CD8-positive, alpha-beta memory T cell (primary cell): ENCODE measurements at regions of chr18 and their contacts with region 1.

Region 1: GRCh38 chr18:62522504-62523254 is at the start of gene ZCCHC2:
- DNase-seq: peak; percentile 96 to 99 (median 98)
- H3K4me3 ChIP-seq: peak within 1 kb of the TSS; percentile 81
- H3K4me3 Mint-ChIP-seq: peak within 1 kb of the TSS; percentile 82 to 98 (median 96)
- H3K27ac ChIP-seq: peak within 1 kb of the TSS; percentile 81
- H3K27ac Mint-ChIP-seq: peak within 1 kb of the TSS; percentile 81 to 98 (median 94)
- H3K4me1 ChIP-seq: peaks cover 26% of the 10 kb centered on the region
- H3K4me1 Mint-ChIP-seq: peaks cover 39 to 45% (median 44%) of the 10 kb centered on the region in 3 donors
- H3K27me3 ChIP-seq: no peaks in the 10 kb centered on the region
- H3K27me3 Mint-ChIP-seq: no peaks in the 10 kb centered on the region
- total RNA-seq, gene ZCCHC2: 36.4 to 37.9 TPM

Region 2: GRCh38 chr18:62425465-62426195 is 97.0 kb before region 1 on chr18:
- CTCF ChIA-PET with region 1: interaction called, 7 read pairs
- POLR2A ChIA-PET with region 1: interaction called, 20 read pairs
- DNase-seq: peak; percentile 15 to 56 (median 51)
- H3K4me3 ChIP-seq: no peak overlapping the region
- H3K4me3 Mint-ChIP-seq: no peak overlapping the region
- H3K27ac ChIP-seq: no peak overlapping the region
- H3K27ac Mint-ChIP-seq: peak overlapping the region in 1 of 8 donors; percentile 10
- H3K4me1 ChIP-seq: peaks cover 10% of the 10 kb centered on the region
- H3K4me1 Mint-ChIP-seq: peaks cover 11 to 18% (median 17%) of the 10 kb centered on the region in 3 donors
- H3K27me3 ChIP-seq: no peaks in the 10 kb centered on the region
- H3K27me3 Mint-ChIP-seq: peaks cover 4 to 12% of the 10 kb centered on the region in 2 donors

Region 3: DNA sequence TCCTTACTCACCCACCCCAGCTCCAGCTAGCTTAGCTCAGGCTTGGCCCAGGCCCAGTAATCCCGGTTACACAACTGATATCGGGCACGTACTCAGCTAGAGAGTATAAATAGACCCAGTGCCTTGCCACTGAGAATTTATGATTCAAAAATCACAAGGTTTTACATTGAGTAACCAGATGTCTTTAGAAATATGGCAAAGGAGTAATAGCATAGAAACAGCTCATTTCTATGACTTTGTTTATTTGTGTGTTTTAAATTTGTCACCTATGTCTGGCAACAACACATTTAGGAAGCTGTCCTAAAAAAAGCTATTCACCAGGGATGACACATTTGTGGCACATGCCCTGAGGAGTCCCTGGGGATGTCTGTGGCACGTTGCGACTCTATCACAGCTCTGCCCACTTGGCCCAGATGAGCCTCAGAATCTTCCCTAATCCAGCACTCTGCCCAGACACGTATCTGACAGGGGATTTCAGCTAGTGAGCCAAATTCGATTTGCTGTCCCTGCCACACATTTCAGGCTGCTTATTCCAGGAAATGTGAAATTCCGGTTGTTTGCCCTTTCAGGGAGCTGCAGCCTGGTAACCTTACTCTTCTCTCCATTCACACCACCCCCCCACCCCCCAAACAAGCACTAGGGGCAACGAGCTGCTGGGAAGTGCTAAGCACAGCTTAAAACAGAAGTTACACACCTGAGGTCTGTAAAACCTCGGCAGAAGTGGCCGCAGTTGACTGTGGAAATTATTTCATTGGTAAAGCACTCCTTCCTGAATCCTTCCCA is 85.3 kb before region 1 on chr18:
- CTCF ChIA-PET with region 1: no interaction called
- POLR2A ChIA-PET with region 1: interaction called, 10 read pairs
- DNase-seq: no peak
- H3K4me3 ChIP-seq: no peak overlapping the region
- H3K4me3 Mint-ChIP-seq: no peak overlapping the region
- H3K27ac ChIP-seq: no peak overlapping the region
- H3K27ac Mint-ChIP-seq: no peak overlapping the region
- H3K4me1 ChIP-seq: no peaks in the 10 kb centered on the region
- H3K4me1 Mint-ChIP-seq: no peaks in the 10 kb centered on the region
- H3K27me3 ChIP-seq: no peaks in the 10 kb centered on the region
- H3K27me3 Mint-ChIP-seq: peaks cover 8 to 19% of the 10 kb centered on the region in 2 donors

Region 4: DNA sequence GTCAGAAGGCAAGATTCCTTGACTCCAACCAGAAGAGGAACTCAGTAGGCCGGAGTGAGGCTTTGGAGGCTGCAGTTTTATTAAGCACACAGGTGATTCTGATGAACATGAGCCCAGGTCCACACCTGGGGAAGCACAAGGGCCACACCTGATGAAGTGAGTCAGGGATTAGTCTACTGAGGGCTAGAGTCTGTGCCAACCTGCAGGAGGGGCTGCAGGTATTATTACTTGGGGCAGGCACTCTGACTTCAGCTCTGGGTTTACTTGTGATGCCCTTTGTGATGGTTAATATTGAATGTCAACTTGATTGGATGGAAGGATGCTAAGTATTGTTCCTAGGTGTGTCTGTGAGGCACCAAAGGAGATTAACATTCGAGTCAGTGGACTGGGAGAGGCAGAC is 75.0 kb before region 1 on chr18:
- CTCF ChIA-PET with region 1: no interaction called
- POLR2A ChIA-PET with region 1: no interaction called
- DNase-seq: no peak
- H3K4me3 ChIP-seq: no peak overlapping the region
- H3K4me3 Mint-ChIP-seq: no peak overlapping the region
- H3K27ac ChIP-seq: no peak overlapping the region
- H3K27ac Mint-ChIP-seq: no peak overlapping the region
- H3K4me1 ChIP-seq: no peaks in the 10 kb centered on the region
- H3K4me1 Mint-ChIP-seq: peaks cover 4 to 5% (median 4%) of the 10 kb centered on the region in 3 donors
- H3K27me3 ChIP-seq: no peaks in the 10 kb centered on the region
- H3K27me3 Mint-ChIP-seq: peaks cover 0 to 5% of the 10 kb centered on the region in 2 donors

Region 5: DNA sequence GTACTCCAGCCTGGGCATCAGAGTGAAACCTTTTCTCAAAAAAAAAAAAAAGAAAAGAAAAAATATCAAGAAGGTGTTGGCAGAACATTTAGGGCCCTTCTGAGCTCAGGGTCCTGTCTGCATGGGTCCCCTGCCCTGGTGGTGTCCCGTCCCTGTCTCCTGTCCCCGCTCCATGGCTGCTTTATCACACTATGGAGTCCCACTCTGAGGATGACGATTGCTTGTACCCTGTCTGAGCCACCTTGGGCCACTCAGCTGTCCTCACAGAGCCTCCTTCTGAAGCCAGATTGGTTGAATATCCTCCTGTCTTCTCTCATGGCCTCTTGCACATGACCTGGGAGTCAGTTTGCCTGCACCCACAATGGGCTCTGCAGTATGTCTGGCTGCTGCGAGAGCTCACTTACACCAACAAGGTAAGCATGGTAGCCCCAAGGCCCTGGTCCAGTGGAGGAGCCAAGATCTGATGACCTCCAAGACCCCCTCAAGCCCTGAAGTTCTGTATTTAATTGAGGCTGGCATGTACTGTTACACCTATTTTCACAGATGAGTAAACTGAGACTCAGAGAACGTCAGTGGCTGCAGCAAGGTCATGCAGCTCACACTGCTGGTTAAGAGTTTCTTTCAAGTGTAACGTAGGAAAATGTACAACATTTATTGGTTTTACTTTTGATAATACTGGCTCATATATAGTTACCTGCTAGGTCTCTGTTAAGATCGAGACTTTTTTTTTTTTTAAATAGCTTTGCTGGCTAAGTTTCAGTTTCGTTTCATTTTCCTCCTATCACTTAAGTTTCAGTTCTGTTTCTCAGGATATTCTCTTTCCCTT is 16.8 kb before region 1 on chr18:
- CTCF ChIA-PET with region 1: interaction called, 21 read pairs
- POLR2A ChIA-PET with region 1: interaction called, 40 read pairs
- DNase-seq: peak in 2 of 5 donors; percentile 33 to 34
- H3K4me3 ChIP-seq: peak overlapping the region; percentile 68
- H3K4me3 Mint-ChIP-seq: peak overlapping the region; percentile 87 to 94 (median 90)
- H3K27ac ChIP-seq: peak overlapping the region; percentile 25
- H3K27ac Mint-ChIP-seq: peak overlapping the region; percentile 92 to 97 (median 96)
- H3K4me1 ChIP-seq: peaks cover 16% of the 10 kb centered on the region
- H3K4me1 Mint-ChIP-seq: peaks cover 12 to 22% (median 21%) of the 10 kb centered on the region in 3 donors
- H3K27me3 ChIP-seq: no peaks in the 10 kb centered on the region
- H3K27me3 Mint-ChIP-seq: no peaks in the 10 kb centered on the region

Region 6: DNA sequence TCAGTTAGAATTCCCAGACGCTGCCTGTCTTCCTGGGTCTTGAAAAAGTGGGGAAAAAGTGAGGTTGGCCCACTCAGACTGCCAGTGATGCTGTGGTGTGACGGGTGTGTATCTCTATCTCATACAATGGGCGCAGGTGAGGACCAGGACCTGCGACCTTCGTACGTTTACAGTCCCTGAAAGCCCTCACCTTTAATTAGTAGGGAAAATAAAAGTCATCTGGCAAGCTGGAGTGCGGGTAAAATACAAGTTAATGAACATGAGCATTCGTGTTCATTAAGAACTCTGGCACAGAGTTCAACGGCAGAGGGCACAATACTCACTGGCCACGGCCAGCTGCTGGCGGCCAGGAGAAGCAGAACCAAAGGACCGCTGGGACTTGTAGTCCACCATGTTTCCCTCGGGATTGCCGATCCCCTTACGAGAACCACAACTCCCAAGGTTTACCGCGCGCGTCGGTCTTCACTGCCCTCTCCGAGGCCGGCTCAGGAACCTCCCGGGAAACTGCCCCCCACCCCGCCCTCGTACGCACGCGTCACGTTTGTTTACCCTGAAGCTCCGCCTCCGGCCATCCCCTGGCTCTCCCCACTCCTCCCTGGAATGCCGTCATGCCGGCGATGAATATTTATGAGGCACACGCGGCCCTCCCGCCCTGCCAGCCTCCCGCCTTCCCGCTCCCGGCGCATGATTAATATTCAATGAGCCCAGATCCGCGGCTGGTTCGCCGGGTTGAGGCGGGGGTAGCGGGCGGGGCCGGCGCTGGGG is 192.2 kb after region 1 on chr18:
- CTCF ChIA-PET with region 1: no interaction called
- POLR2A ChIA-PET with region 1: interaction called, 14 read pairs
- DNase-seq: peak; percentile 86 to 96 (median 90)
- H3K4me3 ChIP-seq: peak overlapping the region; percentile 92
- H3K4me3 Mint-ChIP-seq: peak overlapping the region; percentile 92 to 99 (median 95)
- H3K27ac ChIP-seq: peak overlapping the region; percentile 77
- H3K27ac Mint-ChIP-seq: peak overlapping the region; percentile 90 to 100 (median 98)
- H3K4me1 ChIP-seq: peaks cover 17% of the 10 kb centered on the region
- H3K4me1 Mint-ChIP-seq: peaks cover 32 to 37% (median 37%) of the 10 kb centered on the region in 3 donors
- H3K27me3 ChIP-seq: no peaks in the 10 kb centered on the region
- H3K27me3 Mint-ChIP-seq: no peaks in the 10 kb centered on the region